Calu3 (cell line): ENCODE measurements at regions of chr4 and their contacts with region 1.

Region 1: DNA sequence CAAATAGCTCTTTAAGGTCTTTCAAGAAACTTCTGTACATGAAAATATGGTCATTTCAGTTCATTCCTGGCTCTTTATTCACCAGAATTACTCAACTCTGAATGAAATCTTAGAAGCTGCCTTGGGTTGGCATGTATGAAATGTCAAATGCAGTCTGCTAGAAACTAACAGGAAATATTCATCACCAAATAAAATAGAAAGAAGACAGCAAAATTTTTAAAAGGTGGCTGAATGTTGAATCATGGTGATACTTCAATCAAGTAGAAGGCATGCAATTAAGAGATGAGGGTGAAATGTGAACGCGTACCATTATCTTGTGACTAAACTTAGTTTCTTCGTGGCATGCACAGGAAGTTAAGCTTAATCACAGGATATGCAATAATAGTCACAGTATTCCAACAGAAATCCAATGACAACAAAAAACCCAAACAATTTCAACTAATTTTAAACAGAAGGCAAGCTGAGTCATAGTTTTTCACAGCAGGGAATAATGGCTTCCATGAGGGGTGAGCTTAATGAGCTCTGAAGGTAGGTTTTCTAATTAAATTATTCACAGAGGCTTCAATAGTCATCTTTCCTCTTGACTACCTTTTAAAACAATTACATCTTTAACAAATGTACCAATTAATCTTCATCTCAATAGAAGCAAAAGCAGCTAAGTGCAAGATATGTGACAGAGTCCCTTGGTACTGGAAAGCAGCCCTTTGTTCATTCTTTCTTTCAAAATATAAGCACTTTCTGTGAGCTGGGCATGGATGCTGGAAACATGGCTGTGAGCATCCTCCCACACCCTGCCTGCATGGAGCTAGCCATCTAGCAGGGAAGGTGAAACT is 44.5 kb downstream of the SCFD2 start:
- DNase-seq: no peak
- H3K4me3 Mint-ChIP-seq: peak overlapping the region; percentile 12
- H3K27ac Mint-ChIP-seq: no peak overlapping the region
- H3K4me1 Mint-ChIP-seq: peaks cover 29% of the 10 kb centered on the region
- H3K27me3 Mint-ChIP-seq: no peaks in the 10 kb centered on the region
- CTCF ChIP-seq: no peak

Region 2: DNA sequence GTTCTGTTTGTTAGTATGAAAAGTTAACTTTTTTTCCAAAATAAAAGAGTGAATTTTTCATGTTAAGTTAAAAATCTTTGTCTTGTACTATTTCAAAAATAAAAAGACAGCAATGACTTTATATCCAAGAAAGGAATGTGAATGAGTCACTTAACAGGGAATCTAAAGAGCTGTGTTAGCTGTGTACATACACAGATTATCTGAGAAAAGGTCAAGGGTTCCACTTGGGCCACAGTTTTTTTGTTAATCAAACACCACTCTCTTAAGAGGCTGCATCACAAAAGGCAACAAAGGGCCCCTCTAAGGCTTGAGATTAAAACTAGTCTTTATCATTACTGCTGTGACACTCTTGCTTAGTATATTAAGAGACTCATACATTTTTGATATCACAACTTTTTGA is 138.2 kb after region 1 on chr4:
- CTCF ChIA-PET with region 1: no interaction called
- intact Hi-C with region 1: loop called (anchors 10 kb)
- DNase-seq: no peak
- H3K4me3 Mint-ChIP-seq: no peak overlapping the region
- H3K27ac Mint-ChIP-seq: no peak overlapping the region
- H3K4me1 Mint-ChIP-seq: peaks cover 19% of the 10 kb centered on the region
- H3K27me3 Mint-ChIP-seq: no peaks in the 10 kb centered on the region
- CTCF ChIP-seq: no peak